ENCODE measurements at regions of chr15 and their contacts with region 1.

Region 1: GRCh38 chr15:91126080-91126479 is 26.0 kb downstream of the SV2B start:
- DNase-seq: no peak
- H3K4me3 ChIP-seq: no peak overlapping the region
- H3K27ac ChIP-seq: peak overlapping the region in 32 of 59 donors; percentile 1 to 89 (median 64)
- H3K27me3 ChIP-seq: peaks cover 0 to 4% (median 0%) of the 10 kb centered on the region in 45 donors
- CTCF ChIP-seq: no peak

Region 2: GRCh38 chr15:91171334-91171733 is 45.3 kb after region 1 on chr15:
- intact Hi-C with region 1: loop called in 1 of 2 experiments (anchors 5 kb)
- DNase-seq: no peak
- H3K4me3 ChIP-seq: no peak overlapping the region
- H3K27ac ChIP-seq: peak overlapping the region in 5 of 59 donors; percentile 7 to 40 (median 21)
- H3K27me3 ChIP-seq: no peaks in the 10 kb centered on the region
- CTCF ChIP-seq: no peak

Region 3: DNA sequence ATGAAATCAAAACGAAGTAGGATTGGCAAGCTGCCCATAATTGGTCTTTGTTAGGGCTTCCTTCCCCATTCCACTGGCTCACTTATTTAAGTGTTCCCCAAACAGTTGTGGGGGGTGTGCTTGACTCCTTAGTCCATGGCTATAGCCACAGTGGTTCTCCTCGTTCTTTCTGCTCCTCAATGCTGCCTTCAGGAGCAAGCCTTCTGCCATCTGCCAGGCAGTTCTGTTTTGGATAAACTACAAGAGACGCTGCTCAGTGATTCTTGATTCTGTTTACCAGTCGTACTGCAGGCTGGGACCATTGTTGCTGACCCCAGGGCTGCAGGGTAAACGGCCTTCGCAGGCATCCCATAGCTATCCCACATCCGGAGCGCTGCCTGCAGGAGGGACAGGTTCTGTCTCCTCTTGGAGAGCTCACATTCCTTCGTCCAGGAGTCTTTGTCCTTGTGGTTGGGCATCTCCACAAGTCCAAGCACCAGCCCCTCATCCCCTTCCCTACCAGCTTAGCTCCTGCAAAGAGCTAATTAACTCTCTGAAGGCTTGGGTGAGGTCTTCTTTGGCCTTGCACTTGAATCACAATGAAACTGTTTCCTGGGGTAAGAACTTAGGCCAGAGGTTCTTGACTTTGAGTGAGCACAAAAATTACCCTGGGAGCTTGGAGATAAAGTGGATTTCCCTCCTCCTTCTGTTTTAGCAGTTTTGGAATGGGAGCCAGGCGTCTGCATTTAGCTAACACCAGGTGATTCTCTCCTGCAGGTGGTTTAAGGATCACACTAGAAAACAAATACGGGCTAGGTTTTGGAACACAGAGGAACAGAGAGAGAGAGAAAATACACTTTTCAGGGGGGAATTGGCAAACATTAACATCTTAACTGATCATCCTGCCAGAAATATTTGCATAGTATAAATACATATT is 88.9 kb after region 1 on chr15:
- intact Hi-C with region 1: loop called in 1 of 2 experiments (anchors 10 kb)
- DNase-seq: peak in 1 of 10 donors; percentile 58
- H3K4me3 ChIP-seq: no peak overlapping the region
- H3K27ac ChIP-seq: peak overlapping the region in 41 of 59 donors; percentile 1 to 82 (median 46)
- H3K27me3 ChIP-seq: no peaks in the 10 kb centered on the region
- CTCF ChIP-seq: no peak